Activated CD8-positive, alpha-beta T cell treated with anti-CD3 and anti-CD28 coated beads for 36 hours (primary cell): ENCODE measurements at regions of chr16 and their contacts with region 1.

Region 1: GRCh38 chr16:78002915-78003538 is 19.3 kb upstream of the CLEC3A start:
- DNase-seq: peak; percentile 89
- ATAC-seq: peak; percentile 100
- H3K4me3 Mint-ChIP-seq: no peak overlapping the region
- H3K27ac Mint-ChIP-seq: no peak overlapping the region
- H3K4me1 Mint-ChIP-seq: no peaks in the 10 kb centered on the region
- H3K27me3 Mint-ChIP-seq: peaks cover 5% of the 10 kb centered on the region
- CTCF ChIP-seq: peak; percentile 72

Region 2: DNA sequence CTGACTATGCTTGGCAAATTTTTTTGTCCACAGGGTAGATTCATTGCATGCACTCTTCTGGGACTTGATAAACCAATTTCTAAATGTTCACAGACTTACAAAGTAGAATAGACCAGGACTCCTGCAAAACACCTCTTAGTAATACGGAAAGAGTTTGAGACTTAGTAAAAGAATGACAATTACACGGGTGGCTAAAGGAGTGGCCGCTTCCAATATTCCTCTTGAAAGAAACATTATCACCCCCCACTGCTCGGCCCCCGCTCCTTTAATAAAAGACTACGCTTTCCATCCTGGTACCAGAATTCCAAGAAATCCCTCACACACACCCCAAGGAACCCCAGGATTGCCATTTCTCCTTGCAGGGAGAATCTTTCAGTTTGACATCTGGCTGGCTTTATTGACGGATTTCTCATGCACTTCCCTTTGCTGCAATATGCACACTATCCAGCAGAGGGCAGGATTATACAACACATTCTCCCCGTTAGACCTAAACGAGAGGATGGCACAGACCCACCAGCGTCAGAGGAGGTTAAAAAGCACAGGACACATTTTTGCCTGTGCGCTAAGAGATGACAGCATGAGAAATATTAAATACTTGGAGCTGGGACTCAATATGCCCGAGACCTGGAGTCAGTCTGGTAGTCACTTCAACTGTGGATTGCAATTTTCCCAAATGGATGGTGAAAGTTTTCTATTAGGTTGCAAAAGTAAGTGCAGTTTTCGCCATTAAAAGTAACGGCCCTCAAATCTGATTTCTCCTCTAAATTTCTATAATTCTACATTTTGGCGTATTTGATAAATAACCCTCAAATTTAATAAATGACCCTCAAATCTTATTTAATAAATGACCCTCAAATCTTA is 327.3 kb before region 1 on chr16:
- CTCF ChIA-PET with region 1: interaction called, 46 read pairs
- POLR2A ChIA-PET with region 1: no interaction called
- intact Hi-C with region 1: loop called (anchors 10 kb)
- DNase-seq: peak; percentile 78
- ATAC-seq: peak; percentile 83
- H3K4me3 Mint-ChIP-seq: no peak overlapping the region
- H3K27ac Mint-ChIP-seq: no peak overlapping the region
- H3K4me1 Mint-ChIP-seq: no peaks in the 10 kb centered on the region
- H3K27me3 Mint-ChIP-seq: peaks cover 1% of the 10 kb centered on the region
- CTCF ChIP-seq: peak; percentile 74

Region 3: DNA sequence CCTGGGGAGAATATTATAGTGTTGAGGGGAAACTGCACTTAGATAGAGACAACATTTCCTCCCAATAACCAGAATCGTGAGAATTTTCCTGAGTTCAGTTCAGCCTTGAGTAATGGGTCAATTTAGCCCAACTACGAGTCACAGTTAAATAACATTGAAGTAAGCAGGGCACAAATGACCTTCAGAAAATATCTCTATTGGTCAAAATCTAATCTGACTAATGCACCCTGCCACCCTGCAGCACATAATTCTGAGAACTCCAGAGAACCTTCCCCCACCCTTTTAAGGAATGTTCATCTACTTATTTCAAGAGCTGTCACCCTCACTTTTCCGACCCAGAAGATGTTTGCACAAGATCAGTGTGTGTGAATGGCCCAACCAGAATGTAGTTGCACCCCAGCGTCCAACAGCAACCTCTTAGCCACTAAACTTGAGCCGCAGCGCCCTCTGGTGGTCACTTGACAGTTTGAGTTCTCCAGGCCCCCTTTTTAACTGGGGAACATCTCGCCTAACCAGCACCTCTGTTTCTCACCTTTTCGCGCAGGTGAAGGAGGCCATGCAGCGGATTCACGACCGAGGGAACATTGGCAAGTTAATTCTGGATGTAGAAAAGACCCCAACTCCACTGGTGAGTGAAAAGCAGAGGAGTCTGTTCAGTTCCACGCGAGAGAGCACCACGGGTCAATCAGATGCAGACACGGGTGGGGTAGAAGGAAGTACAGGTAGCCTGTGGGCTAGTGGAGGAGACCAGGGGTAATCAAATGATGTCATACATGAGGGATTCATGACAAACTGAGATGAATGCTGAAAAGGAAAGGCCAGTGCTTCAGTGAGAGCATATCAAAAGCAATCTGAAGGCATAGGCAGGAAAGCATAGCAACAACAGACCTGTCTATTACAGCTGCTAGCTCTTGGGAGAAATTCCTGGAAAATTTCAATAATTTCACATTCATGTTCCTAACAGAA is 31.4 kb before region 1 on chr16:
- CTCF ChIA-PET with region 1: interaction called, 18 read pairs
- POLR2A ChIA-PET with region 1: no interaction called
- intact Hi-C with region 1: no loop called
- DNase-seq: peak; percentile 85
- ATAC-seq: peak; percentile 60
- H3K4me3 Mint-ChIP-seq: no peak overlapping the region
- H3K27ac Mint-ChIP-seq: no peak overlapping the region
- H3K4me1 Mint-ChIP-seq: no peaks in the 10 kb centered on the region
- H3K27me3 Mint-ChIP-seq: peaks cover 7% of the 10 kb centered on the region
- CTCF ChIP-seq: peak; percentile 72

Region 4: GRCh38 chr16:77987810-77988209 is 15.2 kb before region 1 on chr16:
- CTCF ChIA-PET with region 1: interaction called, 16 read pairs
- POLR2A ChIA-PET with region 1: no interaction called
- intact Hi-C with region 1: no loop called
- DNase-seq: no peak
- ATAC-seq: no peak
- H3K4me3 Mint-ChIP-seq: no peak overlapping the region
- H3K27ac Mint-ChIP-seq: no peak overlapping the region
- H3K4me1 Mint-ChIP-seq: no peaks in the 10 kb centered on the region
- H3K27me3 Mint-ChIP-seq: peaks cover 4% of the 10 kb centered on the region
- CTCF ChIP-seq: no peak

Region 5: DNA sequence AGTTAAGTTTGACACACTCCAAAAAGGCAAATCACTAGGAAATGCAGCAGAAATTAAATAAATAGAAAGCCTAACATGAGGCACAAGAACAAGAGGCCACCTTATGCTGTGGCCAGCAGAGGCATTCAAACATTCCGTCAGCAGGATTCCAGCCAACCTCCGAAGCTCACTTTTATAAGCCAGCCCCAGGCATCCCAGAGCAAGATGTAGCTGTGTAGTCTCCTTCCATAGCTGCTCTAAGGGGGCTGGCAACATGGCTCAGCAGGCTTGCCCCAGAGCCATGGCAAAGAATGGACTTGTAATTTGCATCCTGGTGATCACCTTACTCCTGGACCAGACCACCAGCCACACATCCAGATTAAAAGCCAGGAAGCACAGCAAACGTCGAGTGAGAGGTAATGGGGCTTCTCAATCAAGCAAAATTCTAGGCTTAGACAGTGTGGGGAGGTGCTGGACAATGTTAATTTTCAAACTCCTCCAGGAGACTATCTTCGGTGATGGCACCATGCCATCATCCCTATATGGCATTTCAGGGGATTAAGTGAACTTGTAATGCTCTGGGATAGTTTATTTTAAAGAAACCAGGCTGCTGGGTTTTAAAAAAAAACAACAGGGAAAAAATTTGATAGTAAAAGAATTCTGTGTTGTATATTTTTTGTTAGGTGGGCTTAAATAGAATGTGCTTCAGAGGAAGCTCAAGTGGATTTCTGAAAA is 19.5 kb after region 1 on chr16 and contains the start of gene CLEC3A:
- CTCF ChIA-PET with region 1: interaction called, 14 read pairs
- POLR2A ChIA-PET with region 1: no interaction called
- intact Hi-C with region 1: no loop called
- DNase-seq: no peak
- ATAC-seq: no peak
- H3K4me3 Mint-ChIP-seq: no peak within 1 kb of the TSS
- H3K27ac Mint-ChIP-seq: no peak within 1 kb of the TSS
- H3K4me1 Mint-ChIP-seq: no peaks in the 10 kb centered on the region
- H3K27me3 Mint-ChIP-seq: peaks cover 19% of the 10 kb centered on the region
- CTCF ChIP-seq: no peak
- total RNA-seq, gene CLEC3A: not detected

Region 6: DNA sequence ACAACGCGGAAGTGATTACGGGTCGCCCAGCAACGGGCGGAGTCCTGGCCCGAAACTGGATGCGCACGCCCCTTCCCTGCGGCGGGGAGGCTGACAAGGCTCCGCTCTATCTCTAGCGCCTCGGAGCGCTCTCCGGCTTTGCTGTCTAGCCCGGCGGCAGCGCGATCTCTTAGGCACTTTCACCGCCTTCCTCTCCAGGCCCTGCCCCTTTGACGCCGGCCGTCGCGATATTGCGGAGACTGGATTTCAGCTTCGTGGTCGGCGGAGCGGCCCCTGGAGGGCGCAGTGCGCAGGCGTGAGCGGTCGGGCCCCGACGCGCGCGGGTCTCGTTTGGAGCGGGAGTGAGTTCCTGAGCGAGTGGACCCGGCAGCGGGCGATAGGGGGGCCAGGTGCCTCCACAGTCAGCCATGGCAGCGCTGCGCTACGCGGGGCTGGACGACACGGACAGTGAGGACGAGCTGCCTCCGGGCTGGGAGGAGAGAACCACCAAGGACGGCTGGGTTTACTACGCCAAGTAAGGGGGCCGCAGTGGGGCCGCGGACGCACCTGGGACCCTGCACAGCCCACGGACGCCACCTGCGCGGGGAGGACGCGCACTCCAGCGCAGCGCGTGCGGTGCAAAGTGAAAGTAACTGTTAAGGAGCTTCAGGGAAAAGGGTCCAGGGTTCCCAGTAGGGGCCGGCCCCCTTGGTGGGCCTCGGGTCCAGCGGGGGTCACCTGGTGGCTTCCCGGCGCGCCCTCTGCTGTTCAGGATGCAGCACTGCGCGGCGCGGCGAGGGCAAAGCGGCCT is 96.5 kb after region 1 on chr16 and contains the start of gene WWOX:
- CTCF ChIA-PET with region 1: no interaction called
- POLR2A ChIA-PET with region 1: no interaction called
- intact Hi-C with region 1: loop called (anchors 5 kb)
- DNase-seq: peak; percentile 97
- ATAC-seq: peak; percentile 95
- H3K4me3 Mint-ChIP-seq: peak within 1 kb of the TSS; percentile 86
- H3K27ac Mint-ChIP-seq: peak within 1 kb of the TSS; percentile 87
- H3K4me1 Mint-ChIP-seq: peaks cover 31% of the 10 kb centered on the region
- H3K27me3 Mint-ChIP-seq: no peaks in the 10 kb centered on the region
- CTCF ChIP-seq: peak; percentile 96
- total RNA-seq, gene WWOX: 19.1 to 23.7 TPM